ENCODE measurements at regions of chr17 and their contacts with region 1.

Region 1: DNA sequence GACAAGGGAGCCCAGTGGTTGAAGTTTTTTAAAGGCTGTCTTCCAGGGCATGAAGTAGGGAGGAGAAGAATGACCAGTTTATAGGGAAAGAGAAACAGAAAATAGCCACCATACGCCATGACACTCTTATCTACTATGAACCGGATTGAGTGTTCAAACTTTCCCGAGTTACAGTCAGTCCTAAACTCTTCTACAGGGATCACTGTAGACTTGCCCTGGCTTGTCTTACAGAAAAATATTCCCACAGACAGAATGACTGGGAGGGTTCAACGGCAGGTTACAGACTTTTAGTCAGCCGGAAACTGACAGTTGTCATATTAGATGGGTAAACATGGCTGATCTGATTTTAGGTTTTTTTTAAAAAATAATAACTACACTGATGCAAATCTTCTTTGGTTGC is 662.5 kb upstream of the SOX9 start:
- DNase-seq: no peak
- ATAC-seq: no peak
- H3K4me3 ChIP-seq: no peak overlapping the region
- H3K4me3 Mint-ChIP-seq: no peak overlapping the region
- H3K27ac ChIP-seq: no peak overlapping the region
- H3K27ac Mint-ChIP-seq: no peak overlapping the region
- H3K4me1 ChIP-seq: no peaks in the 10 kb centered on the region
- H3K4me1 Mint-ChIP-seq: no peaks in the 10 kb centered on the region
- H3K27me3 ChIP-seq: no peaks in the 10 kb centered on the region
- H3K27me3 Mint-ChIP-seq: no peaks in the 10 kb centered on the region
- CTCF ChIP-seq: no peak

Region 2: GRCh38 chr17:71378036-71378435 is 80.3 kb before region 1 on chr17:
- intact Hi-C with region 1: loop called (anchors 10 kb)
- DNase-seq: no peak
- ATAC-seq: no peak
- H3K4me3 ChIP-seq: no peak overlapping the region
- H3K4me3 Mint-ChIP-seq: no peak overlapping the region
- H3K27ac ChIP-seq: no peak overlapping the region
- H3K27ac Mint-ChIP-seq: no peak overlapping the region
- H3K4me1 ChIP-seq: no peaks in the 10 kb centered on the region
- H3K4me1 Mint-ChIP-seq: no peaks in the 10 kb centered on the region
- H3K27me3 ChIP-seq: no peaks in the 10 kb centered on the region
- H3K27me3 Mint-ChIP-seq: no peaks in the 10 kb centered on the region
- CTCF ChIP-seq: no peak

Region 3: GRCh38 chr17:71441098-71441497 is 17.2 kb before region 1 on chr17:
- intact Hi-C with region 1: no loop called
- DNase-seq: no peak
- ATAC-seq: no peak
- H3K4me3 ChIP-seq: no peak overlapping the region
- H3K4me3 Mint-ChIP-seq: no peak overlapping the region
- H3K27ac ChIP-seq: no peak overlapping the region
- H3K27ac Mint-ChIP-seq: no peak overlapping the region
- H3K4me1 ChIP-seq: no peaks in the 10 kb centered on the region
- H3K4me1 Mint-ChIP-seq: no peaks in the 10 kb centered on the region
- H3K27me3 ChIP-seq: no peaks in the 10 kb centered on the region
- H3K27me3 Mint-ChIP-seq: no peaks in the 10 kb centered on the region
- CTCF ChIP-seq: no peak

Region 4: GRCh38 chr17:71511266-71511995 is 53.1 kb after region 1 on chr17:
- intact Hi-C with region 1: loop called (anchors 10 kb)
- DNase-seq: no peak
- ATAC-seq: no peak
- H3K4me3 ChIP-seq: no peak overlapping the region
- H3K4me3 Mint-ChIP-seq: no peak overlapping the region
- H3K27ac ChIP-seq: no peak overlapping the region
- H3K27ac Mint-ChIP-seq: no peak overlapping the region
- H3K4me1 ChIP-seq: no peaks in the 10 kb centered on the region
- H3K4me1 Mint-ChIP-seq: no peaks in the 10 kb centered on the region
- H3K27me3 ChIP-seq: no peaks in the 10 kb centered on the region
- H3K27me3 Mint-ChIP-seq: no peaks in the 10 kb centered on the region
- CTCF ChIP-seq: no peak